Breast epithelium (tissue), 4 donors: ENCODE measurements at regions of chrX and their contacts with region 1.

Region 1: GRCh38 chrX:126485409-126485808 is 67.2 kb downstream of the DCAF12L1 start:
- DNase-seq: no peak
- H3K4me3 ChIP-seq: no peak overlapping the region
- H3K27ac ChIP-seq: no peak overlapping the region
- H3K4me1 ChIP-seq: no peaks in the 10 kb centered on the region
- H3K27me3 ChIP-seq: no peaks in the 10 kb centered on the region
- CTCF ChIP-seq: no peak
- POLR2A ChIP-seq: no peak

Region 2: GRCh38 chrX:126467332-126467731 is 18.1 kb before region 1 on chrX:
- intact Hi-C with region 1: no loop called
- DNase-seq: no peak
- H3K4me3 ChIP-seq: no peak overlapping the region
- H3K27ac ChIP-seq: no peak overlapping the region
- H3K4me1 ChIP-seq: no peaks in the 10 kb centered on the region
- H3K27me3 ChIP-seq: no peaks in the 10 kb centered on the region
- CTCF ChIP-seq: no peak
- POLR2A ChIP-seq: no peak

Region 3: DNA sequence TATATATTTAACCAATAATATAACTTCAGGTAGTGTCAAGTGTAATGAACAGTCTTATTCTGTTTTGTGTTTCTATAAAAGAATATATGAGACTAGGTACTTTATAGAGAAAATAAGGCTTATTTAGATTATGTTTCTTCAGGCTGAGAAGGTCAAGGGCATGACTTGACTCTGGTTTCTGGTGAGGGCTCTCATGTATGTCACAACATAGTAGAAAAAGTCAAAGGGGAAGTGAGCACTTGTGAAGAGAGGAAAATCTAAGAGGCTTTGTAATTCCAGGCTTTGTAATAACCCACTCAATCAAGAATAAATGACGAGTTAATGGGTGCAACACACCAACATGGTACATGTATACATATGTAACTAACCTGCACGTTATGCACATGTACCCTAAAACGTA is 361.7 kb after region 1 on chrX:
- intact Hi-C with region 1: loop called (anchors 10 kb)
- DNase-seq: no peak
- H3K4me3 ChIP-seq: no peak overlapping the region
- H3K27ac ChIP-seq: no peak overlapping the region
- H3K4me1 ChIP-seq: no peaks in the 10 kb centered on the region
- H3K27me3 ChIP-seq: no peaks in the 10 kb centered on the region
- CTCF ChIP-seq: no peak
- POLR2A ChIP-seq: no peak